B cell (primary cell): ENCODE measurements at regions of chr17 and their contacts with region 1.

Region 1: DNA sequence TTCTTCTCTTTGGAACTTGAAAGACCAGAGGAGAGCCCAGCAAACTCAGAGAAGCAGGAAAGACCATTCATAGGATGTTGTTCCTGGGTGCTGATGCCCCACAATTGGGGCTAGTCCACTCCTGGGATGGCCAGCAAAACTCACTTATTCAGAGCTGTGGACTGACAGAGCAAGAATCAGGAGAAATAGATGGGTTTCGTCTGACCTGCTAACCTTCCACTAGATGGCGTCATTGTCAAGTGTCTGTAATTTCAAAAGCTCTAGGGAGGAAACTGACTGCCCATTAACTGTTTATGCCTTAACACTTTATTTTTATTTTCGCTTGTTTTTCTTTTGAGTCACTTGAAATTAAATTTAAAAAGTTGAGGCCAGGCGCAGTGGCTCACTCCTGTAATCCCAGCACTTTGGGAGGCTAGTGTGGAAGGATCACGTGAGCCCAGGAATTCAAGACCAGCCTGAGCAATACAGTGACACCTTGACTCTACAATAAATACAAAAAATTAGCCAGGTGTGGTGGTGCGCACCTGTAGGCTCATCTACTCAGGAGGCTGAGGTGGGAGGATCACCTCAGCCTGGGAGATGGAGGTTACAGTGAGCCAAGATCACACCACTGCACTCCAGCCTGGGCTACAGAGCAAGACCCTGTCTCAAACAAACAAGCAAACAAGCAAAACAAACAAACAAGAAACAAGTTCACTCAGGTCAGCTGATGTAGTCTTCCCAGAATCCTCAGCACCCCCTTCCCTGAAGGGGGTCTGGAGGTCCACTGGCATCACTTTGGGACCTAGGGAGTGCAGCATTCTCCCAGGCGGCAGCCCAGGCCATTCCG is 28.6 kb upstream of the MILR1 start:
- DNase-seq: peak; percentile 84
- ATAC-seq: peak; percentile 82
- H3K4me3 ChIP-seq: no peak overlapping the region
- H3K4me3 Mint-ChIP-seq: no peak overlapping the region
- H3K27ac ChIP-seq: no peak overlapping the region
- H3K27ac Mint-ChIP-seq: no peak overlapping the region
- H3K4me1 ChIP-seq: peaks cover 3 to 8% of the 10 kb centered on the region in 2 donors
- H3K4me1 Mint-ChIP-seq: peaks cover 5% of the 10 kb centered on the region
- H3K27me3 ChIP-seq: no peaks in the 10 kb centered on the region
- H3K27me3 Mint-ChIP-seq: no peaks in the 10 kb centered on the region
- CTCF ChIP-seq: peak; percentile 81

Region 2: DNA sequence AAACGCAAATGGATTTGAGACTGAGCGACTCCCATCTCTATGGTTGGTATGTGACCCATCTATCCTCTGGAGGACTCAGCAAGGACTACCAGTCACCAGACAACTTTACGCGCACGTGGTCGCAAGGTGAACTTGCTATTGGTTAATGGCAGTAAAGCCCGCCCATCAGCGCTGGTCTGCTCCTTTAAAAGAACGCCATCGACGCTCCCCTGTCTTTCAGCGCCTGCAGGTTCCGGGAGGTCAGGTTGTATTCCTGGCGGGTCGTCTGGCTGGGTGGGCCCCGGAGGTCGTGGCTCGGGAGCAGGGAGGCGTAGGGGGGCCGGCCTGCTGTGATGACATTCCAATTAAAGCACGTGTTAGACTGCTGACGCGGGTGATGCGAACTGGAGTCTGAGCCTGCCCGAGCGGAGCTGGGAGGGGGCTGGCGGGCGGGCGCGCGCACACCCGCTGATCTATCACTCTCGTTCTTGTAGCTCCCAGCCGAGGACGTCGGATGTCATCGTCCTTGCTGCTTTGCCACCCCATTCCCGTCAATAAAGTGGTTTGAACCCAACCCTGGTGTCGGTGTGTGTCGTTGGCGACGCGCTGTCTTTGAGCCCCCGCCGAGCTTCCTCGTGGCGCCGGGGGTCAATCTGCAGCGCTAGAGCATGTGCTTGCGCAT is 274.5 kb before region 1 on chr17:
- CTCF ChIA-PET with region 1: no interaction called
- POLR2A ChIA-PET with region 1: interaction called, 3 read pairs
- intact Hi-C with region 1: loop called (anchors 10 kb)
- DNase-seq: peak; percentile 98
- ATAC-seq: peak; percentile 93
- H3K4me3 ChIP-seq: peak overlapping the region; percentile 77 to 95 (median 92)
- H3K4me3 Mint-ChIP-seq: no peak overlapping the region
- H3K27ac ChIP-seq: peak overlapping the region; percentile 86 to 88
- H3K27ac Mint-ChIP-seq: no peak overlapping the region
- H3K4me1 ChIP-seq: peaks cover 14 to 18% of the 10 kb centered on the region in 2 donors
- H3K4me1 Mint-ChIP-seq: peaks cover 15% of the 10 kb centered on the region
- H3K27me3 ChIP-seq: no peaks in the 10 kb centered on the region
- H3K27me3 Mint-ChIP-seq: no peaks in the 10 kb centered on the region
- CTCF ChIP-seq: no peak

Region 3: DNA sequence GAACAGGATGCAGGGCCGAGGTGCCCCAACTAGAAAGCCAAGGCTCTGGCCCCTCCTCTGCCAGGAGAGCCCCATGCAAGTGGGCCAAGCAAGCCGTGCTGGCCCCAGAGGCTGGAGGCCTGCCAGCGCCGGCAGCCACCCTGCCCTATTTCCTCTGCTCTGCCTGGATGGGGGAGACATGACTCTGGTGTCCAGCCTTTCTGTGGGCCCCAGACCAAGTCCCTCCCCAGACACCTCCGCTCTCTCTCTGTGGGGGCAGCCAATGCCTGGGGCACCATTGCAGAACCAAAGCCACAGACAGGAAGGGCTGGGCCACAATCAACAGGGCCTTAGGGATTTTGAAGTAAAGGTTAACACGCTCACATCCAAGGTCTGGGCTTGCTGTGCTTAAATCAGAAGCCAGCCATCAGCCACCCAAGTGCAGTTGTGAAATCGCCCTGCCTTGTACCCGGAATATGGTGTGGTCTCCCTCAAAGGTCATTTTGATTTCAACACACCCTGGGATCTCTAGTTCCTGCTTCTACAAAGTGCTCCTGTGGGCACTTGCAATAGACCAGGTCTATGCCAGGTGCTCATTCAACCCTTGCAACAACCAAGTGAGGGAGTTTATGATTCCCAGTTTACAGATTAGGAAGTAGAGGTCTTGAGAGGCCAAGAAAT is 93.8 kb before region 1 on chr17:
- CTCF ChIA-PET with region 1: interaction called, 316 read pairs
- POLR2A ChIA-PET with region 1: no interaction called
- intact Hi-C with region 1: loop called (anchors 1 kb)
- DNase-seq: peak; percentile 37
- ATAC-seq: peak; percentile 76
- H3K4me3 ChIP-seq: no peak overlapping the region
- H3K4me3 Mint-ChIP-seq: peak overlapping the region; percentile 66
- H3K27ac ChIP-seq: no peak overlapping the region
- H3K27ac Mint-ChIP-seq: peak overlapping the region; percentile 76
- H3K4me1 ChIP-seq: peaks cover 45 to 50% of the 10 kb centered on the region in 2 donors
- H3K4me1 Mint-ChIP-seq: peaks cover 51% of the 10 kb centered on the region
- H3K27me3 ChIP-seq: no peaks in the 10 kb centered on the region
- H3K27me3 Mint-ChIP-seq: no peaks in the 10 kb centered on the region
- CTCF ChIP-seq: no peak

Region 4: DNA sequence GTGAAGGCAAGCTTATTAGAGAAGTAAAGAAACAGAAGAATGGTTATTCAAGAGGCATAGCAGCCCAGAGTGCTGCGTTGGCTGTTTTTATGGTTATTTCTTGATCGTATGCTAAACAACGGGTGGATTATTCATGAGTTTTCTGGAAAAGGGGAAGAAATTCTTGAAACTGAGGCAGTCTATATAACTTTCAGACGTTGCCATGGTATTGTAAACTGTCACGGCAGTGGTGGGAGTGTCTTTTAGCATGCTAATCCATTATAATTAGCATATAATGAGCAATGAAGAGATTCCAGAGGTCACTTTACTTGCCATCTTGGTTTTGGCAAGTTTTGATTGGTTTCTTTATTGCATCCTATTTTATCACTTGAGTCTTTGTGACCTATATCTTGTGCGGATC is 11.2 kb after region 1 on chr17:
- CTCF ChIA-PET with region 1: interaction called, 33 read pairs
- POLR2A ChIA-PET with region 1: no interaction called
- intact Hi-C with region 1: no loop called
- DNase-seq: no peak
- ATAC-seq: no peak
- H3K4me3 ChIP-seq: no peak overlapping the region
- H3K4me3 Mint-ChIP-seq: no peak overlapping the region
- H3K27ac ChIP-seq: no peak overlapping the region
- H3K27ac Mint-ChIP-seq: no peak overlapping the region
- H3K4me1 ChIP-seq: no peaks in the 10 kb centered on the region
- H3K4me1 Mint-ChIP-seq: no peaks in the 10 kb centered on the region
- H3K27me3 ChIP-seq: no peaks in the 10 kb centered on the region
- H3K27me3 Mint-ChIP-seq: no peaks in the 10 kb centered on the region
- CTCF ChIP-seq: no peak

Region 5: DNA sequence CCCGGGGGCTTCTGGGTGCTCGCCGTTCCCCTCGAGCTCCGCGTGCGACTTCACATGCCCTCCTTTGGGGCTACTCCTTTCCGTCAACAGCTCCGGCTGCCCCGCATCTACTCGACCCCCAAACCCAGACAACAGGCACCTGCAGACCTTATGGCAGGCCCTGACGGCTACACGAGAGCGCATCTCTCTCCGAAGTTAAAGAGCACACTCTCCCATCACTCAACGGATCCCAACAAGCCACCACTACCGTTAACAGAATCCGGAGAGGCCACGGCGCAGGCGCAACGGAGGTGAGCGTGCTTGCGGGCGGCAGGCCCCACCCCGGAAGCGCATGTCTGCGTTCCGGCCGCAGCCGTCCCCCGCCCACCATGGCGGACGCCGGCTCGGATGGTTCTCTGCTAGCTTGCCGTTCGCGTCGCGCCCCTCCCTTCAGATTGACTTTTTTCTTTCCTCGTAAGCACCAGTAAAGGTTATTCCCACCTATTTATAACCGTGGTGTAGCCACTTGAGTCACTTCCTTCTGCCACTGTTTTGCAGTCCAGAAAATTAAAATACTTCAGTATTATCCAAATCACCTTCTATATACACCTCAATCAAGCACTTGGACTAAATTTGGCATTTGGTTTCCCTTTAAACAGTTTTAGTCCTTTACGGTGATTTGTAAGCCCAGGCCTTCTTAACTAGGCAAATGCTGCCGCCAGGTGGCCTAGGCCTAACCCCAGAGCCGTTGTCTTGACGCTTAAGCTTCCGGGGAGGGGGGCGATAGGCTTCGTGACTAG is 76.6 kb after region 1 on chr17 and contains the start of gene POLG2:
- CTCF ChIA-PET with region 1: interaction called, 199 read pairs
- POLR2A ChIA-PET with region 1: interaction called, 7 read pairs
- intact Hi-C with region 1: loop called (anchors 1 kb)
- DNase-seq: peak; percentile 95
- ATAC-seq: peak; percentile 86
- H3K4me3 ChIP-seq: peak within 1 kb of the TSS; percentile 71 to 90 (median 74)
- H3K4me3 Mint-ChIP-seq: peak within 1 kb of the TSS; percentile 99
- H3K27ac ChIP-seq: peak within 1 kb of the TSS; percentile 76 to 82
- H3K27ac Mint-ChIP-seq: peak within 1 kb of the TSS; percentile 98
- H3K4me1 ChIP-seq: peaks cover 29% of the 10 kb centered on the region in 2 donors
- H3K4me1 Mint-ChIP-seq: peaks cover 68% of the 10 kb centered on the region
- H3K27me3 ChIP-seq: no peaks in the 10 kb centered on the region
- H3K27me3 Mint-ChIP-seq: no peaks in the 10 kb centered on the region
- CTCF ChIP-seq: peak; percentile 55
- total RNA-seq, gene POLG2: 74.5 and 84.8 TPM in 2 replicates

Region 6: GRCh38 chr17:64599187-64599676 is 178.9 kb after region 1 on chr17:
- CTCF ChIA-PET with region 1: interaction called, 11 read pairs
- POLR2A ChIA-PET with region 1: no interaction called
- intact Hi-C with region 1: no loop called
- DNase-seq: peak; percentile 62
- ATAC-seq: peak; percentile 97
- H3K4me3 ChIP-seq: no peak overlapping the region
- H3K4me3 Mint-ChIP-seq: peak overlapping the region; percentile 63
- H3K27ac ChIP-seq: peak overlapping the region in 1 of 2 donors; percentile 69
- H3K27ac Mint-ChIP-seq: peak overlapping the region; percentile 77
- H3K4me1 ChIP-seq: peaks cover 8 to 16% of the 10 kb centered on the region in 2 donors
- H3K4me1 Mint-ChIP-seq: peaks cover 18% of the 10 kb centered on the region
- H3K27me3 ChIP-seq: no peaks in the 10 kb centered on the region
- H3K27me3 Mint-ChIP-seq: no peaks in the 10 kb centered on the region
- CTCF ChIP-seq: no peak